Activated CD4-positive, alpha-beta memory T cell treated with anti-CD3 and anti-CD28 coated beads for 36 hours (primary cell): ENCODE measurements at regions of chr3 and their contacts with region 1.

Region 1: DNA sequence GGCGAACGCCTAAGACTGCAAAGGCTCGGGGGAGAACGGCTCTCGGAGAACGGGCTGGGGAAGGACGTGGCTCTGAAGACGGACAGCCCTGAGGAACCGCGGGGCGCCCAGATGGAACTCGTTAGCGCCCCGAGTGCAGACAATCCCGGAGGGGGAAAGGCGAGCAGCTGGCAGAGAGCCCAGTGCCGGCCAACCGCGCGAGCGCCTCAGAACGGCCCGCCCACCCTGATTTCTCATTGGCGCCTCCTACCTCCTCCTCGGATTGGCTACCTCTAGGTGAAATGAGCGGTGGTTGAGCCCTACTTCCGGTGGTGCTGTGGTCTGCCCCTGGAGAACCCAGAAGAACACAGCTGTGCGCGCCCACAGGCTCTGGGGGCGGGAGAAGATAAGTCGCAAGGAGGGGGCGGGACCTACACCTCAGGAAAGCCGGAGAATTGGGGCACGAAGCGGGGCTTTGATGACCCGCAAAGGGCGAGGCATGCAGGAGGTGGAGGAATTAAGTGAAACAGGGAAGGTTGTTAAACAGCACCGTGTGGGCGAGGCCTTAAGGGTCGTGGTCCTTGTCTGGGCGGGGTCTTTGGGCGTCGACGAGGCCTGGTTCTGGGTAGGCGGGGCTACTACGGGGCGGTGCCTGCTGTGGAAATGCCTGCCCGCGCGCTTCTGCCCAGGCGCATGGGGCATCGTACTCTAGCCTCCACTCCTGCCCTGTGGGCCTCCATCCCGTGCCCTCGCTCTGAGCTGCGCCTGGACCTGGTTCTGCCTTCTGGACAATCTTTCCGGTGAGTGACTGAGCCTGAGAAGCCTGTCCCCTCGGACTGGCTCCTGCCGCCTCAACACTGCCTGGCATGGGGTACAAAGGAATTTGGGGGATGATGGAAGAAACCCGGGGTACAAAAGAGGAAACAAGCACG is at the start of gene OGG1:
- DNase-seq: peak; percentile 98
- H3K4me3 Mint-ChIP-seq: peak within 1 kb of the TSS; percentile 96
- H3K27ac Mint-ChIP-seq: peak within 1 kb of the TSS; percentile 88
- H3K4me1 Mint-ChIP-seq: peaks cover 50% of the 10 kb centered on the region
- H3K27me3 Mint-ChIP-seq: no peaks in the 10 kb centered on the region
- total RNA-seq, gene OGG1: 35.7 to 36.5 TPM

Region 2: GRCh38 chr3:9649791-9650521 is 99.9 kb before region 1 on chr3:
- CTCF ChIA-PET with region 1: no interaction called
- POLR2A ChIA-PET with region 1: no interaction called
- intact Hi-C with region 1: loop called (anchors 1 kb)
- DNase-seq: no peak
- H3K4me3 Mint-ChIP-seq: peak overlapping the region; percentile 95
- H3K27ac Mint-ChIP-seq: peak overlapping the region; percentile 73
- H3K4me1 Mint-ChIP-seq: peaks cover 29% of the 10 kb centered on the region
- H3K27me3 Mint-ChIP-seq: no peaks in the 10 kb centered on the region

Region 3: GRCh38 chr3:9769426-9770275 is 19.8 kb after region 1 on chr3 and contains the start of gene CAMK1:
- CTCF ChIA-PET with region 1: no interaction called
- POLR2A ChIA-PET with region 1: interaction called, 7 read pairs
- intact Hi-C with region 1: loop called (anchors 1 kb)
- DNase-seq: peak; percentile 84
- H3K4me3 Mint-ChIP-seq: peak within 1 kb of the TSS; percentile 80
- H3K27ac Mint-ChIP-seq: peak within 1 kb of the TSS; percentile 69
- H3K4me1 Mint-ChIP-seq: peaks cover 33% of the 10 kb centered on the region
- H3K27me3 Mint-ChIP-seq: no peaks in the 10 kb centered on the region
- total RNA-seq, gene CAMK1: 48.2 to 51.9 TPM

Region 4: GRCh38 chr3:9779721-9780457 is 30.0 kb after region 1 on chr3:
- CTCF ChIA-PET with region 1: interaction called, 4 read pairs
- POLR2A ChIA-PET with region 1: interaction called, 3 read pairs
- intact Hi-C with region 1: loop called (anchors 1 kb)
- DNase-seq: peak; percentile 62
- H3K4me3 Mint-ChIP-seq: peak overlapping the region; percentile 39
- H3K27ac Mint-ChIP-seq: peak overlapping the region; percentile 93
- H3K4me1 Mint-ChIP-seq: peaks cover 62% of the 10 kb centered on the region
- H3K27me3 Mint-ChIP-seq: no peaks in the 10 kb centered on the region